ENCODE measurements at regions of chr19 and their contacts with region 1.

Region 1: DNA sequence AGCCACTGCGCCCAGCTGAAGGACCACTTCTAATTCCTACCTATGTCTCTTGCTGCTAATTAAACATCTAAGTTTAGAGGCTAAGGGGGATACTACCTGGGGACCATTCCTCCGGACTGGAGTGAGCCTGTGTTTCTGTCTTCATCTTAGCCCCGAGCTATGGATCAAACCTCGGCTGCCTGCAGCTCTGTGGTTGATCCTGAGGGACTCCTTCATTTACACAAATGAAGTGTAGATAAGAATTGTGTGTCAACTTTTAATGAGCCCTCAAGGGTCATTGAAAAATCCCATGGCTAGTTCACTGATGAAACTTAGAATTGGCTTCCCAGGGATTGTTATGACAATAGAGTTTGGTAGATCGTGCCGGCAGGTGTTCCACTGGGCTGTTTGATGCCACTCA is 31.5 kb upstream of the OR10H1 start:
- DNase-seq: no peak
- H3K4me3 ChIP-seq: no peak overlapping the region
- H3K27ac ChIP-seq: no peak overlapping the region
- H3K4me1 ChIP-seq: peaks cover 0 to 23% (median 5%) of the 10 kb centered on the region in 4 experiments
- H3K27me3 ChIP-seq: no peaks in the 10 kb centered on the region

Region 2: DNA sequence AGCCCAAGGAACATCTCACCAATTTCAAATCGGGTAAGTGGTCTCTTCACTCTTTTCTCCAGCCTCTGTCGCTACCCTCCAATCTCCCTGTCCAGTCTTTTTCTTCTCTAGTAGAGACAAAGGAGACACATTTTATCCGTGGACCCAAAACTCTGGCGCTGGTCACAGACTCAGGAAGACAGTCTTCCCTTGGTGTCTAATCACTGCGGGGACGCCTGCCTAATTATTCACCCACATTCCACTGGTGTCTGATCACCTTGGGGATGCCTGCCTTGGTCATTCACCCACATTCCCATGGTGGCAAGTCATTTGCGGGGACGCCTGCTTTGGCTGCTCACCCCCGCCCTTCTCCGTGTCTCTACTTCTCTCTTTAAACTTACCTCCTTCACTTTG is 17.6 kb before region 1 on chr19:
- CTCF ChIA-PET with region 1: no interaction called
- POLR2A ChIA-PET with region 1: no interaction called
- DNase-seq: no peak
- H3K4me3 ChIP-seq: no peak overlapping the region
- H3K27ac ChIP-seq: peak overlapping the region in 1 of 2 experiments; percentile 77
- H3K4me1 ChIP-seq: peaks cover 0 to 8% (median 3%) of the 10 kb centered on the region in 4 experiments
- H3K27me3 ChIP-seq: no peaks in the 10 kb centered on the region

Region 3: DNA sequence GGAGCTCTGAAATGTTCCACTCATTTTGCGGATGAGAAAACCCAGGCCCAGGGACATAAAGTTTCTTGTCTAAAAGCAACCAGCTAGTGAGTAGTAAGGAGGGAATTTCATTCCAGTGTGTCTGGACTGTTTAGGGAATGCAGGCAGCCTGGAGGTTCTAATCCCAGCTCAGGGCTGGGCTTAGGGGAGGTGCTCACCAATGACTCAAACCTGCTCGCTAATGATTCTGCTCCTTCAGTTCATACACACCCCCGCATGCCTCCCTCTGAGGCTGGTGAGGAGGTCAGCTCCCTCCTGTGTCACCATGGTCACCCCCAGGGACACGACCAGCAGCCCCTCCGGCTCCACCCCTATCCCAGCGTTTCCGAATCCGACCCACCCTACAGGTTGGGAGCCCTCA is 16.3 kb after region 1 on chr19:
- CTCF ChIA-PET with region 1: interaction called, 10 read pairs
- POLR2A ChIA-PET with region 1: no interaction called
- DNase-seq: no peak
- H3K4me3 ChIP-seq: peak overlapping the region in 1 of 7 experiments; percentile 0
- H3K27ac ChIP-seq: no peak overlapping the region
- H3K4me1 ChIP-seq: peaks cover 0 to 34% (median 9%) of the 10 kb centered on the region in 4 experiments
- H3K27me3 ChIP-seq: no peaks in the 10 kb centered on the region